Activated T-helper 2 cell treated with anti-CD3 and anti-CD28 coated beads, Interferon-gamma antibody, Interleukin-2, Interleukin-4, amounts not matched to agents 10 μg/mL and 5 μg/mL and 100 μg/mL, durations not matched to agents 14 hours and 24 hours and 36 hours (primary cell): ENCODE measurements at regions of chr22 and their contacts with region 1.

Region 1: DNA sequence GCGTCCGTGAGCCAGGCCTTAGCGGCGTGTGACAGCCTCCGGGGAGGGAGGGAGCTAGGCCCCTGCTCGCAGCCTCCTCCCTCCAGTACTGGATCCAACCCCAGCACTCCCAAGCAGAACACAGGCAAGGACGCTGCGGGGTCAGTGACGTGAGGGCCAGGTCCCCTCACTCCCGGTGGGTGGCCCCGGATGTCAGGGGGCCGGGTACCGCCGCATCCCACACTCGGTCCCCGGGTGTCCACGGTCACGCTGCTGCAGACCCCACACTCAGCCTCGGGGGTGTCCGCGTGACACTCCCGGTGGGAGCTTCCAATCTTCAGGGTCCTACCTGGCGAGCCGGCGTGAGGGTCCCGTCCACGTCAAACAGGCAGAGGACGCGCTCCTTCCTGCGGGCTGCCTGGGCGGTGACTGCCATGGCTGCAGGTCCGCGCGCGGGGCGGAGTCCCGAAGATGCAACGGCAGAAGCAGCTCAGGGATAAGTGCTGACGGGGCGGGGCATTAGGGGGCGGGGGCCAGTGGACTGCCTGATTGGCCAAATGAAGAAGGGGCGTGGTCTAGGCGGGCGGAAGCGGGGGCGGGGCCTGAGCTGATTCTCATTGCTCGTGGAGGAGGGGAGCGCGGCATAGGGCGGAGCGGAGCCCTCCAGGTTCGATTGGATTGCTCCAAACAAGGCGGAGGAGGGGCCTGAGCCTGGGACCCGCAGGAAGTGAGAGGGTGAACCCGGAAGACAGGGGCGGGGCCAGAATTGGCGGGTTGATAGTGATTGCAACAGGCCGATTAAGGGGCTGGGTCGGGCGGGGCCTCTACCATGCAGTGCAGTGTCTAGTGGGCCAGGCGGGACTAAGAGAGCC is at the start of gene PMM1:
- DNase-seq: peak; percentile 100
- H3K4me3 Mint-ChIP-seq: peak within 1 kb of the TSS; percentile 91
- H3K27ac Mint-ChIP-seq: peak within 1 kb of the TSS; percentile 84
- H3K4me1 Mint-ChIP-seq: peaks cover 10% of the 10 kb centered on the region
- H3K27me3 Mint-ChIP-seq: no peaks in the 10 kb centered on the region
- total RNA-seq, gene PMM1: 23.4 and 25.8 TPM in 2 replicates

Region 2: GRCh38 chr22:41603873-41604332 is 14.3 kb after region 1 on chr22:
- intact Hi-C with region 1: loop called (anchors 1 kb)
- DNase-seq: peak; percentile 70
- H3K4me3 Mint-ChIP-seq: no peak overlapping the region
- H3K27ac Mint-ChIP-seq: peak overlapping the region; percentile 6
- H3K4me1 Mint-ChIP-seq: peaks cover 38% of the 10 kb centered on the region
- H3K27me3 Mint-ChIP-seq: peaks cover 4% of the 10 kb centered on the region